Heart right ventricle (tissue), 16 donors: ENCODE measurements at regions of chr2 and their contacts with region 1.

Region 1: GRCh38 chr2:17538844-17539554 is 1.5 kb upstream of the VSNL1 start:
- DNase-seq: peak; percentile 63 to 77
- ATAC-seq: peak; percentile 80 to 95 (median 89)
- H3K4me3 ChIP-seq: peak overlapping the region; percentile 15 to 65 (median 56)
- H3K27ac ChIP-seq: peak overlapping the region; percentile 63 to 90 (median 82)
- H3K4me1 ChIP-seq: peaks cover 0 to 19% (median 3%) of the 10 kb centered on the region in 9 donors
- H3K27me3 ChIP-seq: peaks cover 0 to 96% (median 62%) of the 10 kb centered on the region in 7 donors
- CTCF ChIP-seq: peak in 1 of 9 donors; percentile 4

Region 2: GRCh38 chr2:17518212-17519154 is 20.5 kb before region 1 on chr2 and contains the start of gene RAD51AP2:
- intact Hi-C with region 1: loop called in 1 of 10 experiments (anchors 1 kb)
- DNase-seq: peak; percentile 86 to 89
- ATAC-seq: peak; percentile 97 to 100 (median 99)
- H3K4me3 ChIP-seq: peak within 1 kb of the TSS; percentile 14 to 51 (median 43)
- H3K27ac ChIP-seq: peak within 1 kb of the TSS; percentile 69 to 91 (median 86)
- H3K4me1 ChIP-seq: peaks cover 0 to 8% (median 5%) of the 10 kb centered on the region in 9 donors
- H3K27me3 ChIP-seq: peaks cover 0 to 41% (median 0%) of the 10 kb centered on the region in 7 donors
- CTCF ChIP-seq: no peak
- total RNA-seq, gene RAD51AP2: 0.06 to 0.49 (median 0.14) TPM in 9 of 10 donors, not detected in the other

Region 3: DNA sequence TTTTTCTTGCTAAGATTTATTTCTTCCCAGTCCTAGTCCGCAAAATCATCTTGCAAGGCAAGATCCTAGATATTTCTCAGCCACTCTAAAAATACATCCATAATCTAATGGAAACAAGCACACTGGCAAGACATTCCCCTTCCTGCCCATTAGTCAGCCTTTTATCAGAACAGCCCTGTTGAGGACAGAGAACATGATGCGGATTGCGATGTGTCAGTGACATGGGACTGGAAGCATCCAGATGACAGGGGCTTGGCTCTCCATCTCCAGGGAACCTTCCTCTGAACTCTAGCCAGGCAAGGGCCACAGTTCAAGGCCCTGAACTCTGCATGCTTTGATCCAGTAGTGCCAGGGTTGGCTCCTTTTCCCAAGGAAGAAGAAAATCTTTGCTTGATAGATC is 71.5 kb after region 1 on chr2:
- intact Hi-C with region 1: loop called in 3 of 10 experiments (anchors 1 to 5 kb)
- DNase-seq: peak; percentile 33 to 68
- ATAC-seq: peak; percentile 83 to 98 (median 93)
- H3K4me3 ChIP-seq: no peak overlapping the region
- H3K27ac ChIP-seq: peak overlapping the region in 9 of 10 donors; percentile 44 to 82 (median 66)
- H3K4me1 ChIP-seq: peaks cover 2 to 41% (median 15%) of the 10 kb centered on the region in 9 donors
- H3K27me3 ChIP-seq: no peaks in the 10 kb centered on the region
- CTCF ChIP-seq: no peak

Region 4: DNA sequence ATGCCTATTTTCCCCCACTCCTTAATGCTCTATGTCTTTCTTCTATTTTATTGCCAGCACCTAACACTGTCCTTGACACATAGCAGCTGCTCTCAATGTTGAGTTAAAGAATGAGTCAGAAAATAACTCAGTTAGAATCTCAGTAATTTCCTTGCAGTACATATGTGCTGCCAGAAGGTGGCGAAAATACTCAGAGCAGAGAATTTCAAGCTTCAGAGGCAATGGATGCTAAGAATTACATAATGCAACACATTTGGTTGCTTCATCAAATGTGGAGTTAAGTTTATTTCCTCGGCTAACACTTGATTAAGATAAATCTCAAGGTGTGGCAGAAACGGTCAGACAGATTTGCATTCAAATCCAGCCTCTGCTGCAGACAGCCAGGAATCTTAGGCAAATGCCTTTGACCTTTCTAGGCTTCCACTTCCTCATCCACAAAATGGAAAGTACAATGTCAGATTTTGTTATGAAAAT is 107.1 kb after region 1 on chr2:
- intact Hi-C with region 1: loop called in 3 of 10 experiments (anchors 10 kb)
- DNase-seq: peak in 1 of 2 donors; percentile 71
- ATAC-seq: peak; percentile 51 to 77 (median 66)
- H3K4me3 ChIP-seq: no peak overlapping the region
- H3K27ac ChIP-seq: peak overlapping the region in 6 of 10 donors; percentile 2 to 55 (median 33)
- H3K4me1 ChIP-seq: peaks cover 0 to 46% (median 30%) of the 10 kb centered on the region in 9 donors
- H3K27me3 ChIP-seq: no peaks in the 10 kb centered on the region
- CTCF ChIP-seq: peak; percentile 75 to 90 (median 84)

Region 5: DNA sequence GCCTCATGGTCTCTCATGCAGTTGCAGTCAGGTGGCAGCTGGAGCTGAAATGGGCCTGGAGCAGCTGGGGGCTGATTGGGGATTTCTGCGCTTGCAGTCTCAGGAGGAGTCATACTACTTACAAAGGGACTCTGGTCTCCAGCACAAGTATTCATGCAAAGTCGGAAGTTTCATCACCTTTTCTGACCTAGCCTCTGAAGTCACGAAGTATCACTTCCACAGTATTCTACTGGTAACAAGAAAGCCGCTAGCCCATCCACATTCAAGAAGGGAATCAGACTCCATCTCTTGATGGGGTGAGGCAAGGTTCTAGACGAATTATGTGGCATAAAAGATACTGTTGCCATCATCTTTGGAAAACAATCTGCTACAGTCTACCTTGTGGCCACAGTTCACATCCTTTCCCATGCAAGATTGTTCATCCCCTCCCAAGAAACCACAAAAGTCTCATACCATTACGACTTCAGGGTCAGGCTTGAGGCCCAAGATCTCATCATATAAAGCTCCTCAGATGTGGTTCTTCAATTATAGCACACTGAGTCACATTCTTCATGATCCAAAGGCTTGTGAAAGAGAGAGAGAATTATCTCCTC is 119.3 kb after region 1 on chr2:
- intact Hi-C with region 1: no loop called
- DNase-seq: no peak
- ATAC-seq: no peak
- H3K4me3 ChIP-seq: no peak overlapping the region
- H3K27ac ChIP-seq: no peak overlapping the region
- H3K4me1 ChIP-seq: peaks cover 0 to 4% (median 0%) of the 10 kb centered on the region in 9 donors
- H3K27me3 ChIP-seq: no peaks in the 10 kb centered on the region
- CTCF ChIP-seq: no peak

Region 6: GRCh38 chr2:17682098-17682857 is 143.3 kb after region 1 on chr2:
- intact Hi-C with region 1: no loop called
- DNase-seq: no peak
- ATAC-seq: peak in 5 of 8 donors; percentile 42 to 75 (median 62)
- H3K4me3 ChIP-seq: no peak overlapping the region
- H3K27ac ChIP-seq: no peak overlapping the region
- H3K4me1 ChIP-seq: peaks cover 0 to 14% (median 0%) of the 10 kb centered on the region in 9 donors
- H3K27me3 ChIP-seq: no peaks in the 10 kb centered on the region
- CTCF ChIP-seq: no peak

Region 7: GRCh38 chr2:18001671-18002070 is 462.7 kb after region 1 on chr2:
- intact Hi-C with region 1: no loop called
- DNase-seq: no peak
- ATAC-seq: no peak
- H3K4me3 ChIP-seq: no peak overlapping the region
- H3K27ac ChIP-seq: no peak overlapping the region
- H3K4me1 ChIP-seq: peaks cover 0 to 8% (median 0%) of the 10 kb centered on the region in 9 donors
- H3K27me3 ChIP-seq: no peaks in the 10 kb centered on the region
- CTCF ChIP-seq: no peak

Region 8: GRCh38 chr2:18149645-18150246 is 610.7 kb after region 1 on chr2:
- intact Hi-C with region 1: no loop called
- DNase-seq: no peak
- ATAC-seq: peak in 1 of 8 donors; percentile 35
- H3K4me3 ChIP-seq: no peak overlapping the region
- H3K27ac ChIP-seq: no peak overlapping the region
- H3K4me1 ChIP-seq: no peaks in the 10 kb centered on the region
- H3K27me3 ChIP-seq: peaks cover 0 to 6% (median 0%) of the 10 kb centered on the region in 7 donors
- CTCF ChIP-seq: peak; percentile 37 to 79 (median 74)